AG04449 (cell line): ENCODE measurements at regions of chr16 and their contacts with region 1.

Region 1: GRCh38 chr16:18969050-18969854 is 14.5 kb upstream of the TMC7 start:
- DNase-seq: no peak
- H3K4me3 ChIP-seq: peak overlapping the region; percentile 49
- CTCF ChIP-seq: peak; percentile 95

Region 2: DNA sequence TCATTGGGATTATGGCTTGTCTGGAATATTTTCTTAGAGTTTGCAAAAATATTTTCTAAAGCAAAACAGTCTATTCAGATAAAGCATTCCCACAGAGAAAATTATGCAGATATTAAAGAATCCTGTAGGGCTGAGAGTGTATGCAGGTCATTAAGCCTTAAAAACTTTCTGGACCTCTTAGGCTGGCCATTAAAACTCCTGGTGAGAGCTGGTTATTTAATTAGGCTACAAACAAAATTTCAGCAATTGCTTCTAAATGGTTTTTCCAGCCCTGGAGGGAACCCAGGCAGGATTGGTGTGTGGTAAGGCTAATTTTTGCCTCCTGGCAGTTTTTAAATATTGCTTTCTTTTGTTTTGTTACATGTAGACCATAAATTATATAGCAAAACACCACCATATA is 15.7 kb before region 1 on chr16:
- CTCF ChIA-PET with region 1: interaction called, 54 read pairs
- POLR2A ChIA-PET with region 1: no interaction called
- DNase-seq: no peak
- H3K4me3 ChIP-seq: no peak overlapping the region
- CTCF ChIP-seq: no peak

Region 3: DNA sequence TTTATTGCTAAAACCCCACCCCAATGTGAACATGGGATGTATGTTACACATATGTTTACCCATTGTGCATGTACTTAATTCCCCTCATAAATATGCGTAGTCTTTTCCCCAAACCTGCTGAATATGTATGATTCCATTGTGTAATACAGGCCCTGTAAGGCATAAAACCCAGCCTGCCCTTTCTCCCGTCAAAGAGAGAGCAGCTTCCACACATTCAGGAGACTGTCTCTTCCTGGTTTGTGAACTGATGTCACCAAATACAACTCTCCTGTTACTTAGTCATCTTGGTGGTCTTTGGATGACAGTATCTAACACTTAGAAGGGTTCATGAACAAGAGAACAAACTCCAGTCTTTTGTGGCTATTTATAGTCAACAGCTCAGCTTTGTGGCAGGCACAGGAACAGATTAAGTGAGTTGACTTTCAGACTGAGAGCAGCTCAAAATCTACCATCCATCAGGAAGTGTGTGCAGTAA is 10.2 kb before region 1 on chr16:
- CTCF ChIA-PET with region 1: interaction called, 54 read pairs
- POLR2A ChIA-PET with region 1: no interaction called
- DNase-seq: no peak
- H3K4me3 ChIP-seq: no peak overlapping the region
- CTCF ChIP-seq: no peak

Region 4: DNA sequence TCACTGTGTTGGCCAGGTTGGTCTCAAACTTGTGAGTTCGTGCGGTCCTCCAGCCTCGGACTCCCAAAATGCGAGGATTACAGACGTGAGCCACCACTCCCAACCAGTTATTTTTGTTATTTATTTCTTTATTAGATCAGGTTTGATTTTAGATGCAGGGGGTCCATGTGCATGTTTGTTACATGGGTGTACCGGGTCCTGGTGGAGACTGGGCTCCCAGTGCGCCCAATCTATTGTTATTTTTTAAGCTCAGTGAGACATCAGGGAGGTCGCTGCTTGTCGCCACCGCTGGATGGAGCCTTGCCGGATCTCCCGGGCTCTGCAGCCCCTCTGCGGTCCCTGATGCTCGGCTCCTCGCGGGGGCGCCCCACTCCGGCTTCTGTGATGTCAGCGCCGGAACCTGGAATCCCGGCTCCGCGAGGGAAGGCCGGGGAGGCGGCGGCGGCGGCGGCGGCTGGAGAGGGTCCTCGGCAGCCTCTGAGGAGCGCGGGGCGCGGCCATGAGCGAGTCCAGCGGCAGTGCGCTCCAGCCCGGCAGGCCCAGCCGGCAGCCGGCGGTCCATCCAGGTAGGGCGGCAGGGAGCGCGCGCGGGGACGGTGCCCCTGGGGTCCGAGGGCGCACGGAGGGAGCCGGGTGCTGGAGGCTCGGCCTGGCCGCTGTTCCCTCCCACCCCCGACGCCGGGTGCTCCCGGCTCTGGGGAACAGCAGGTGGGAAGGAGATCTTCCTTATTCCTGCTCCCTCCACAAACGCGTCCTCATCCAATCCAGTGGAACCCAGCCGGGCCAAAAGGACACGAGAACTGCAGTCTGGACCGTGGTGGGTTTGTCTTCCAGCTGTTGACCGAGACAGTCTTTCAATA is 14.5 kb after region 1 on chr16 and contains the start of gene TMC7:
- CTCF ChIA-PET with region 1: interaction called, 53 read pairs
- POLR2A ChIA-PET with region 1: no interaction called
- DNase-seq: no peak
- H3K4me3 ChIP-seq: peak within 1 kb of the TSS; percentile 60
- CTCF ChIP-seq: peak; percentile 92

Region 5: GRCh38 chr16:19044769-19045168 is 75.5 kb after region 1 on chr16:
- CTCF ChIA-PET with region 1: no interaction called
- POLR2A ChIA-PET with region 1: no interaction called
- DNase-seq: no peak
- H3K4me3 ChIP-seq: no peak overlapping the region
- CTCF ChIP-seq: no peak